CD4-positive, alpha-beta T cell (primary cell): ENCODE measurements at regions of chr11 and their contacts with region 1.

Region 1: GRCh38 chr11:111601979-111602864 is at the start of gene SIK2:
- DNase-seq: peak; percentile 75 to 97 (median 84)
- ATAC-seq: peak; percentile 80
- H3K4me3 ChIP-seq: peak within 1 kb of the TSS; percentile 93
- H3K4me3 Mint-ChIP-seq: peak within 1 kb of the TSS; percentile 99
- H3K27ac ChIP-seq: peak within 1 kb of the TSS; percentile 56 to 83
- H3K27ac Mint-ChIP-seq: peak within 1 kb of the TSS; percentile 92
- H3K4me1 ChIP-seq: peaks cover 19% of the 10 kb centered on the region
- H3K4me1 Mint-ChIP-seq: peaks cover 31% of the 10 kb centered on the region
- H3K27me3 ChIP-seq: no peaks in the 10 kb centered on the region
- H3K27me3 Mint-ChIP-seq: no peaks in the 10 kb centered on the region
- CTCF ChIP-seq: peak; percentile 76
- total RNA-seq, gene SIK2: 3.6 to 5.8 TPM

Region 2: GRCh38 chr11:111766093-111766833 is 164.0 kb after region 1 on chr11 and contains the start of gene PPP2R1B:
- CTCF ChIA-PET with region 1: interaction called, 3 read pairs
- POLR2A ChIA-PET with region 1: interaction called, 17 read pairs
- intact Hi-C with region 1: loop called in 1 of 2 experiments (anchors 1 kb)
- DNase-seq: peak; percentile 52 to 85 (median 64)
- ATAC-seq: peak; percentile 97
- H3K4me3 ChIP-seq: peak within 1 kb of the TSS; percentile 85
- H3K4me3 Mint-ChIP-seq: peak within 1 kb of the TSS; percentile 99
- H3K27ac ChIP-seq: peak within 1 kb of the TSS; percentile 16 to 67
- H3K27ac Mint-ChIP-seq: peak within 1 kb of the TSS; percentile 70
- H3K4me1 ChIP-seq: peaks cover 12% of the 10 kb centered on the region
- H3K4me1 Mint-ChIP-seq: peaks cover 41% of the 10 kb centered on the region
- H3K27me3 ChIP-seq: no peaks in the 10 kb centered on the region
- H3K27me3 Mint-ChIP-seq: no peaks in the 10 kb centered on the region
- CTCF ChIP-seq: no peak
- total RNA-seq, gene PPP2R1B: 34.5 to 39.2 TPM

Region 3: DNA sequence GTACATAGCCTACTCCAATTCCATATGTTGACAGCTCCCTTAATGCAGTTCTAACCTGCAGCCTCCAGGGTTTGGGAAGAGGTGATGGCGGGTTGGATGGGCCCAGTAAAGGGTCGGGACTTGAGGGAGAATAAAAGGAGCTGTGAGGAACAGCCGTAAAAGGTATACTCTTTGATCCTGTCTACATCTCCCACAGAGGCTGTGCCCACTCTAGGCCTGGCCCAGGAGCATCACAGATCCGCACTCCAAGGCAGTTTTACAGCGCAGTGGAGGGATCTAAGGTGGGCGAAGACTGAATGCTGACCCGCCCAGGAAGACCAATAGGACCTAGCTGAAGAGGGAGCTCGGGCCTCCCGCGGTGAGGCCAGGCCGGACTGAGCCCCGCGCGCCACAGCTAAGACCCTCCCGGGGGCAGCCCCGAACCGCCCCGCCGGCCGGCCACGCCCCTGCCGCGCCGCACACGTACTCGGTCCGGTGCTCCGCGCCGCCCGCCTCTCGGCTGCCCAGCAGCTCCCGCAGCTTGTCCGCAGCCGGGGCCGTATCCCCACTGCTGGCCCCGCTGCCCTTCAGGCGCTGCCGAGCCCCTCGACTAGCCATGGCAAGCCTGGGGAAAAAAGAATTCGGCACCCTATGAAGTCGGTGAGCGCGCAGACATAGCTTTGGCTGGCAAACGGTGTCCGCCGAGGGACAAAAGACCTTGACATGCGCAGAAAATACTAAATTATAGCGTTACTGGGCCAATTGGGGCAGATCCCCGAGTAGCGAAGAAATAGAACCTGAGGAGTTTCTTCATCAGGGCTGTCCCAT is 268.9 kb after region 1 on chr11 and contains the start of gene ALG9:
- CTCF ChIA-PET with region 1: no interaction called
- POLR2A ChIA-PET with region 1: interaction called, 5 read pairs
- intact Hi-C with region 1: loop called in 1 of 2 experiments (anchors 2 kb)
- DNase-seq: peak; percentile 82 to 92 (median 90)
- ATAC-seq: peak; percentile 83
- H3K4me3 ChIP-seq: peak within 1 kb of the TSS; percentile 82
- H3K4me3 Mint-ChIP-seq: peak within 1 kb of the TSS; percentile 90
- H3K27ac ChIP-seq: peak within 1 kb of the TSS; percentile 83 to 84
- H3K27ac Mint-ChIP-seq: peak within 1 kb of the TSS; percentile 93
- H3K4me1 ChIP-seq: peaks cover 19% of the 10 kb centered on the region
- H3K4me1 Mint-ChIP-seq: peaks cover 35% of the 10 kb centered on the region
- H3K27me3 ChIP-seq: no peaks in the 10 kb centered on the region
- H3K27me3 Mint-ChIP-seq: no peaks in the 10 kb centered on the region
- CTCF ChIP-seq: peak; percentile 26
- total RNA-seq, gene ALG9: 31.1 to 33.4 TPM

Region 4: GRCh38 chr11:112086422-112087191 is 484.4 kb after region 1 on chr11 and contains the starts of genes SDHD and TIMM8B:
- CTCF ChIA-PET with region 1: no interaction called
- POLR2A ChIA-PET with region 1: interaction called, 3 read pairs
- intact Hi-C with region 1: loop called in 1 of 2 experiments (anchors 5 kb)
- DNase-seq: peak; percentile 91 to 99 (median 94)
- ATAC-seq: peak; percentile 93
- H3K4me3 ChIP-seq: peak within 1 kb of the TSS; percentile 88
- H3K4me3 Mint-ChIP-seq: peak within 1 kb of the TSS; percentile 99
- H3K27ac ChIP-seq: peak within 1 kb of the TSS; percentile 35 to 75
- H3K27ac Mint-ChIP-seq: peak within 1 kb of the TSS; percentile 94
- H3K4me1 ChIP-seq: peaks cover 32% of the 10 kb centered on the region
- H3K4me1 Mint-ChIP-seq: peaks cover 54% of the 10 kb centered on the region
- H3K27me3 ChIP-seq: no peaks in the 10 kb centered on the region
- H3K27me3 Mint-ChIP-seq: no peaks in the 10 kb centered on the region
- CTCF ChIP-seq: peak; percentile 29
- total RNA-seq, gene SDHD: 24.8 to 29.4 TPM
- total RNA-seq, gene TIMM8B: 9.1 to 10.5 TPM

Region 5: GRCh38 chr11:113314389-113315301 is 1712.4 kb after region 1 on chr11 and contains the start of gene TTC12:
- CTCF ChIA-PET with region 1: no interaction called
- POLR2A ChIA-PET with region 1: no interaction called
- intact Hi-C with region 1: loop called in 1 of 2 experiments (anchors 10 kb)
- DNase-seq: peak; percentile 86 to 95 (median 93)
- ATAC-seq: peak; percentile 98
- H3K4me3 ChIP-seq: peak within 1 kb of the TSS; percentile 60
- H3K4me3 Mint-ChIP-seq: peak within 1 kb of the TSS; percentile 93
- H3K27ac ChIP-seq: peak within 1 kb of the TSS; percentile 63 to 85
- H3K27ac Mint-ChIP-seq: peak within 1 kb of the TSS; percentile 88
- H3K4me1 ChIP-seq: peaks cover 30% of the 10 kb centered on the region
- H3K4me1 Mint-ChIP-seq: peaks cover 46% of the 10 kb centered on the region
- H3K27me3 ChIP-seq: no peaks in the 10 kb centered on the region
- H3K27me3 Mint-ChIP-seq: no peaks in the 10 kb centered on the region
- CTCF ChIP-seq: no peak
- total RNA-seq, gene TTC12: 26.5 to 34.5 TPM